Breast epithelium (tissue), 4 donors: ENCODE measurements at regions of chr22 and their contacts with region 1.

Region 1: GRCh38 chr22:47071078-47071806 is 308.8 kb downstream of the TBC1D22A start:
- DNase-seq: no peak
- H3K4me3 ChIP-seq: no peak overlapping the region
- H3K27ac ChIP-seq: no peak overlapping the region
- H3K4me1 ChIP-seq: no peaks in the 10 kb centered on the region
- H3K27me3 ChIP-seq: no peaks in the 10 kb centered on the region
- CTCF ChIP-seq: no peak
- POLR2A ChIP-seq: no peak

Region 2: GRCh38 chr22:46748908-46749675 is 322.1 kb before region 1 on chr22:
- intact Hi-C with region 1: loop called (anchors 10 kb)
- DNase-seq: no peak
- H3K4me3 ChIP-seq: no peak overlapping the region
- H3K27ac ChIP-seq: no peak overlapping the region
- H3K4me1 ChIP-seq: peaks cover 0 to 6% of the 10 kb centered on the region in 2 donors
- H3K27me3 ChIP-seq: peaks cover 0 to 10% of the 10 kb centered on the region in 2 donors
- CTCF ChIP-seq: no peak
- POLR2A ChIP-seq: no peak

Region 3: GRCh38 chr22:47022075-47022473 is 49.2 kb before region 1 on chr22:
- intact Hi-C with region 1: no loop called
- DNase-seq: no peak
- H3K4me3 ChIP-seq: no peak overlapping the region
- H3K27ac ChIP-seq: no peak overlapping the region
- H3K4me1 ChIP-seq: no peaks in the 10 kb centered on the region
- H3K27me3 ChIP-seq: no peaks in the 10 kb centered on the region
- CTCF ChIP-seq: no peak
- POLR2A ChIP-seq: no peak

Region 4: GRCh38 chr22:47043835-47044721 is 27.2 kb before region 1 on chr22:
- intact Hi-C with region 1: no loop called
- DNase-seq: no peak
- H3K4me3 ChIP-seq: no peak overlapping the region
- H3K27ac ChIP-seq: no peak overlapping the region
- H3K4me1 ChIP-seq: no peaks in the 10 kb centered on the region
- H3K27me3 ChIP-seq: no peaks in the 10 kb centered on the region
- CTCF ChIP-seq: no peak
- POLR2A ChIP-seq: no peak